Activated T-helper 1 cell treated with anti-CD3 and anti-CD28 coated beads, Interleukin-12 subunit alpha, Interleukin-12 subunit beta, Interleukin-2, Interleukin-4 antibody, amounts not matched to agents 30 ng/mL and 10 ng/mL and 1 ng/mL, durations not matched to agents 14 hours and 24 hours and 36 hours (primary cell): ENCODE measurements at regions of chr19 and their contacts with region 1.

Region 1: GRCh38 chr19:52028027-52028779 is at the start of gene ZNF614:
- DNase-seq: peak; percentile 83
- H3K4me3 Mint-ChIP-seq: peak within 1 kb of the TSS; percentile 92
- H3K27ac Mint-ChIP-seq: peak within 1 kb of the TSS; percentile 97
- H3K4me1 Mint-ChIP-seq: peaks cover 36% of the 10 kb centered on the region
- H3K27me3 Mint-ChIP-seq: no peaks in the 10 kb centered on the region
- total RNA-seq, gene ZNF614: 11.2 and 11.3 TPM in 2 replicates

Region 2: DNA sequence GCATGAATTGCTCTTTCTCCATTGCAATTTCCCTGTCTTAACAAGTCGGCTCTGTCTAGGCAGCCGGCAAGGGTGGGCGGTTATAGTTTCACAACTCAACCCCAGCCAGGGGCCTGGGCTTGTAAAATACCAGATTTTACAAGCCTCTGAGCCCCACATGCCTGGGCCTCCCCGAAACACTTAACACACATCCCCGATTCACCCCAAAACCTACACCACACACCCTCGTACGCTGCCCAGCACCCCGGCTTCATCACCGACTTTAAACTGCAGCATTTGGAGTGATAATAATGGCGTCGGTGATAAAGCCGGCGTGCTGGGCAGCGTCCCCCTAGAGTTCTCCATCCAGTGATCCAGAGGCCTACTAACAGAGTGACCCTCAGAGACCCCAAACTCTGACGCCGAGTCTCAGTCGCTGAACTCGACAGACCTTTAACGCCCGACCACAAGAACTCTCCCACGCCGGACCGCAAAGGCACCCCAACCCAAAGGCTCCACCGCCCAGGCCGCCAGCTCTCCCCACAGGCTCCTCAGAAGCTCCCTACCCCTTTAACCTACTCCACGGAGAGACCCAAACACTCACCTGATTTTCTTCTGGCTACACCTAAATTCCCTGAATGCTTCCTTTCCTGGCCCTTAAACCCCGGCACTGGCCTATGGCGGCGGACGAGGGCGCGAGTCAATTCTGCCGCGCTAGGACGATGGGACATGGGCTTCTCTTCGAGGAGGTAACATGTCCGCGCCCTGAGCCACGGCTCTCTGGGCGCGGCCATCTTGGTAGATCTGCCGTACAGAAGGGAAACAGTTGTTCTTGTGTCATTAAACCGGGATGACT is 123.7 kb before region 1 on chr19 and contains the start of gene ZNF649:
- intact Hi-C with region 1: loop called (anchors 1 kb)
- DNase-seq: peak; percentile 70
- H3K4me3 Mint-ChIP-seq: peak within 1 kb of the TSS; percentile 98
- H3K27ac Mint-ChIP-seq: peak within 1 kb of the TSS; percentile 99
- H3K4me1 Mint-ChIP-seq: peaks cover 21% of the 10 kb centered on the region
- H3K27me3 Mint-ChIP-seq: peaks cover 3% of the 10 kb centered on the region
- total RNA-seq, gene ZNF649: 10.5 and 12.3 TPM in 2 replicates

Region 3: GRCh38 chr19:51986309-51987291 is 41.6 kb before region 1 on chr19 and contains the start of gene ZNF350:
- intact Hi-C with region 1: loop called (anchors 5 kb)
- DNase-seq: peak; percentile 83
- H3K4me3 Mint-ChIP-seq: peak within 1 kb of the TSS; percentile 94
- H3K27ac Mint-ChIP-seq: peak within 1 kb of the TSS; percentile 88
- H3K4me1 Mint-ChIP-seq: peaks cover 12% of the 10 kb centered on the region
- H3K27me3 Mint-ChIP-seq: no peaks in the 10 kb centered on the region
- total RNA-seq, gene ZNF350: 7.9 and 8.7 TPM in 2 replicates

Region 4: DNA sequence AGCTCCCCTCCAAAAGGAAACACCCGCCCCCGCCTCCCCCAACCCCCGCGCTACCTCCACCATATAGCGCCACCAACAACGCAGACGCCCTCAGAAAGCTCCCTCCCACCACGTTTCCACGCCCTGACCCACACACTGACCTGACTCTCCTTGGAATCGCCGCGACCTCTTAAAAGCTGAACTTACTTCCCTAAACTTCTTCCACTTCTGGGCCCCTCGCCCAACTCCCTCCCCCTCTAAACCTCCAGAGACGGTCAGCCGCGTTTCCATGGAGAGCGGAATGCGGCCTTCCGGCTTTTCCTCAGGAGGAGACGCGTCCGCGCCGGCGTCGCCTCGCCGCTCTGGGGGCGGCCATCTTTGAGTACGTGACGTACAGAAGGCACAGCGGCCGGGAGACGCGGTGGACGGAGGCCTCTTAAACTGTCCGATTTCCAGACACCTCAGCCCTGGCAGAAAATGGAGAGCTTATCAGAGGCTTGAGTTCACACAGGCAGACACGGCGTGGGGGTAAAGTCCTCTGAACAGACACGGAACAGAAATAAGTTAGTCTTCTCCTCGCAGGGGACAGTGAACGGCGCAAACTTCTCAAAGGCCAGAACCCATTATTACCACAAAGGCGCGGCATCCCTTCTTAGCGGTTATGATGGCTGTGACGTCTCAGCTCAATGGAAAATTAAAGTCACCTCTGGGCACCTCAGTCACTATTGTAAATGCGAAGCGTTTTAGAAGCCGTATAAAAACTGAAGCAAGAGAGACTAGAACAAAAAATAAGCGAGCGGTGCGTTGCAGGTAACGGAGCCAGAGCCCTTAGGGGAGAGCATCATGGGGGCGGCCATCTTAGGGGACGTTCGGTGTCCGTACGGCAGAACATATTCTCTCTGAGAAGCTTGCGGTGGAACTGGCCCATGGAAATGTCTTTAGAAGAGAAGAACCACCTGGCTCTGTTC is 20.6 kb after region 1 on chr19 and contains the start of gene ZNF432:
- intact Hi-C with region 1: loop called (anchors 1 kb)
- DNase-seq: peak; percentile 76
- H3K4me3 Mint-ChIP-seq: peak within 1 kb of the TSS; percentile 95
- H3K27ac Mint-ChIP-seq: peak within 1 kb of the TSS; percentile 99
- H3K4me1 Mint-ChIP-seq: peaks cover 20% of the 10 kb centered on the region
- H3K27me3 Mint-ChIP-seq: no peaks in the 10 kb centered on the region
- total RNA-seq, gene ZNF432: 12.5 and 15.0 TPM in 2 replicates

Region 5: DNA sequence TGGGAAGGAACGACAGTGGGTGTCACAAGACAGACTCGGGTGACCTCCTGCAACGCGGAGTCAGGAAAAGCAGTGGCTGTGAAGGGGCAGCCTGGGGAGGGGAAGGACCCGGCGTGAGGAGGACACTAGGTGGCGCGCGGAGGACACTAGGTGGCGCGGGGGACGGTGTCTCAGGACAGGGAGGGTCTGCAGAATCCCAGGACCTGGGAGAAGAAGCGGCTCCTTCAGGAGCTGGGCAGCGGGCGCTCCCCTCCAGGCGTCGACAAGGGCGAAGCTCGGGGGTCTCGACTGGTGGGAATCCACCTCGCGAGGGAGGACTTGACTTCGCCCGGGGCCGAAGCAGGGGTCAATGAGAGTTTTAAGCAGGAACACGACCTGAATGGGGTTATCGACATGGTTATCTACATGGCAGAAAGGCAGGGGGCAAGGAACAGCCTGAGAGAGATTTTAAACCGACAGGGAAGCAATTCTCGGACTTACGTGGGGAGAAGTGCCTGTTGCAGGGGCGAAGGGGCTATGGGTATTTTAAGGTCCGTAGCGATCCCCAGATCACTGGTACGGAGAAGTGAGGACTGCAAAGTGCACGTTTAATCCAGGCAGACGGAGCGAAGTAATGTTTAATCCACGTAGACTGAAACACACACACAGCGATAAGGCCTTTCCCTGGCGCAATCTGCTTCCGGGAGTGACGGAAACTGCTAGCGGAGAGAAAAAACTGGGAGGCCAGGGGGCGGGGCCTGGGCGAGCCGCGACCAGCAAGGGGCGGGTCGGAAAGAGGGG is 111.2 kb after region 1 on chr19 and contains the start of gene ZNF616:
- intact Hi-C with region 1: loop called (anchors 5 kb)
- DNase-seq: peak; percentile 94
- H3K4me3 Mint-ChIP-seq: peak within 1 kb of the TSS; percentile 98
- H3K27ac Mint-ChIP-seq: peak within 1 kb of the TSS; percentile 94
- H3K4me1 Mint-ChIP-seq: peaks cover 23% of the 10 kb centered on the region
- H3K27me3 Mint-ChIP-seq: no peaks in the 10 kb centered on the region
- total RNA-seq, gene ZNF616: 4.1 and 6.7 TPM in 2 replicates

Region 6: DNA sequence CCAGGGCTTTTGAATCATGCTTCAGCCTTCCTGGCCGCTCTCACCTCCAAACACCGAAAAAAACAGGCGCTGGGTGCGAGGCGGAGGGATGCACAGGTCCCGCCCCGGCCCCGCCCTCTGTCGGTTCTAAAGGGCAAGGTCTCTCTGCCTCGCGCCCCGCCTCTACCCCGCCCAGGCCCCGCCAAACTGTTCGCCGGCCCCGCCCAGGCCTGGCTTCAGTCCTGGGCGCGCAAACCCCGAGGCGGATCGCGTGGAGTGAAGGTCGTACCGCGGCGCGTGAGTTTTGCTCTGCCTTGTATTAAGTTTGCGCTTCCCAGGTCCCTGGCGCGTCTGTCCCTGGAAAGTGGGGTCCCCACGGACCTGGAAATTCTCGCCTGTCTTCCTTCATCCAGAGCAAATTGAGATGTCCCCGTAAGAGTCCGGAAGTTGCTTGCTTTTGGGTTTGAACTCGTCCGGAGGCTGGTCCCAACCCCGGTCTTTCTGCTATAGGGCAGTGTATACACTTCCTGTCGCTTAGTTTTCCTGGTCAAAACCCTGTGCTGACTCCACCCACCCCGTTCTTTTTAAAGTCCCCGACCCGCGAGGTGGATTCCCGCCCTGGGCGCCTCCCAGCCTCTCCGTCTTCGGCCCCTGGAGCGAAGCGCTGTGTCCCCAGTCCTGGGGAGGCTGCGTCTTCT is 507.7 kb after region 1 on chr19:
- intact Hi-C with region 1: loop called (anchors 5 kb)
- DNase-seq: peak; percentile 80
- H3K4me3 Mint-ChIP-seq: peak overlapping the region; percentile 84
- H3K27ac Mint-ChIP-seq: peak overlapping the region; percentile 88
- H3K4me1 Mint-ChIP-seq: peaks cover 11% of the 10 kb centered on the region
- H3K27me3 Mint-ChIP-seq: no peaks in the 10 kb centered on the region